IMR-90 (cell line): ENCODE measurements at regions of chr6 and their contacts with region 1.

Region 1: GRCh38 chr6:106339334-106340029 is 13.9 kb upstream of the ATG5 start:
- DNase-seq: peak; percentile 70
- ATAC-seq: peak; percentile 99
- H3K4me3 ChIP-seq: no peak overlapping the region
- H3K27ac ChIP-seq: no peak overlapping the region
- H3K4me1 ChIP-seq: no peaks in the 10 kb centered on the region
- H3K27me3 ChIP-seq: peaks cover 9% of the 10 kb centered on the region
- CTCF ChIP-seq: peak; percentile 73
- POLR2A ChIP-seq: no peak
- RAD21 ChIP-seq: peak; percentile 59

Region 2: GRCh38 chr6:105824732-105825131 is 514.8 kb before region 1 on chr6:
- CTCF ChIA-PET with region 1: no interaction called
- POLR2A ChIA-PET with region 1: no interaction called
- dilution Hi-C with region 1: no loop called
- in situ Hi-C with region 1: no loop called
- intact Hi-C with region 1: no loop called
- DNase-seq: peak; percentile 81
- ATAC-seq: peak; percentile 91
- H3K4me3 ChIP-seq: no peak overlapping the region
- H3K27ac ChIP-seq: no peak overlapping the region
- H3K4me1 ChIP-seq: no peaks in the 10 kb centered on the region
- H3K27me3 ChIP-seq: no peaks in the 10 kb centered on the region
- CTCF ChIP-seq: no peak
- POLR2A ChIP-seq: no peak
- RAD21 ChIP-seq: no peak

Region 3: GRCh38 chr6:106444777-106445507 is 105.5 kb after region 1 on chr6:
- CTCF ChIA-PET with region 1: interaction called, 3 read pairs
- POLR2A ChIA-PET with region 1: interaction called, 5 read pairs
- dilution Hi-C with region 1: no loop called
- in situ Hi-C with region 1: no loop called
- intact Hi-C with region 1: loop called (anchors 5 kb)
- DNase-seq: peak; percentile 69
- ATAC-seq: peak; percentile 75; the same call in 1 of the 2 replicates
- H3K4me3 ChIP-seq: no peak overlapping the region
- H3K27ac ChIP-seq: no peak overlapping the region
- H3K4me1 ChIP-seq: no peaks in the 10 kb centered on the region
- H3K27me3 ChIP-seq: peaks cover 18% of the 10 kb centered on the region
- CTCF ChIP-seq: peak; percentile 73
- POLR2A ChIP-seq: no peak
- RAD21 ChIP-seq: peak; percentile 78

Region 4: DNA sequence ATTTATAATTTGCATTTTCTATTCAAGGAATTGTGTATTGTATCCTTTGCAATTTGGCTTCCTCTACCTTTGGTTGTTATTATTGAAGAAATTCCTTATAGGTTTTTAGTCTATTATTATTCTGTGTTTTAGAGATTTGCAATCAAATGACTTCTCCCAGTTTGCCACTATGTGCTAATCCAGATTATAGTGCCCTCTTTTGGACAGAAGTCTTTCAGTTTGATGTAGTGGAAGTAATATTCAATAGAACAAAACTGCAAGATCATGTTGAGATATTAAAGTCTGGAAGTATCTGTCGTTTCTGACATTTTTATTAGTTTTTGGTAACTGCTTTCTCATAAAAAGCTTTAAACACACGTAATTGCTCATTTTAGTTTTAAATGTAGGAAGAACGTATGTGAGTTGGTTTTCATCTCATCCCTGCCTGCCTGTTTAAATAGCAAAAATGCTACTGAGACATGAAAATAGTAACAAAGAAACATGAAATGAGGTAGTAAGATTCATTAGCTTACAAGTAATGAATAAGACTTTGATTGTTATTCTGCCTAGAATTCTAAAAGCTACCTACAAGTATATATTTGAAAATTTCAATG is 217.0 kb after region 1 on chr6:
- CTCF ChIA-PET with region 1: interaction called, 3 read pairs
- POLR2A ChIA-PET with region 1: no interaction called
- dilution Hi-C with region 1: no loop called
- in situ Hi-C with region 1: loop called (anchors 10 kb)
- intact Hi-C with region 1: no loop called
- DNase-seq: peak; percentile 47
- ATAC-seq: peak; percentile 49; the same call in 1 of the 2 replicates
- H3K4me3 ChIP-seq: no peak overlapping the region
- H3K27ac ChIP-seq: no peak overlapping the region
- H3K4me1 ChIP-seq: no peaks in the 10 kb centered on the region; the same call in 1 of the 2 replicates
- H3K27me3 ChIP-seq: no peaks in the 10 kb centered on the region
- CTCF ChIP-seq: peak; percentile 54
- POLR2A ChIP-seq: no peak
- RAD21 ChIP-seq: peak; percentile 61

Region 5: DNA sequence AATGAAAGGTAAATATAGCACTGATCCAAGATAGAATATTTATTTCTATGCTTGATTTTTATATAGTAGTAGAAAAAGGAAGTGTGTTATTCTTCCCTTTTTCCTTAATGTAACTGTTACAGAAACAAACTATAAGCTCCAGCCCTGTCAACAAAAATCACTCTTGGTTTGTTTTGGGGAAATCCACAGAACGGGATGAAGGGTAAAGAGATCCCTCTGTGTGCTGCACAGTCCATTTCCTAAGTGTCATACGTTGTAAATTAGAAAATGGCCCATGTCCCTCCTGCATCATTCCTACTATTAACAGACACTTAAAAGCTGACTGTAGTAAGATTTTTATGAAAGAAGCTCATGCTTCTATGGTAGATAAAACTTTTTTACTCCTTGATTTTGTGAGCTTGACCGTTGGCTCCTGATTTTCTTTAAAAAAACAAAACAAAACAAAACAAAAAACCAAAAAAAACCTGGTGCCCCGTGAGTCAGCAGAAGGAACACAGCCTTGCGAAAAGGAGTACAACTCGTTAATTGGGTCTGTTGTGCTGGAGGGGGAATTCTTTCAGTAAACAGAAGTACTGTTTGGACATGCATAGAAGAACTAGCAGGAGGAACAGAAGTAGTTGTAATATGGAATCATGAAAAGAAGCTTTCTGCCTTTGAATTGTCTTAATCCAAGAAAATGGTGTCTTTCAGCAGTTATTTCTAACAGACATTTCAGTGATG is 222.4 kb after region 1 on chr6:
- CTCF ChIA-PET with region 1: interaction called, 11 read pairs
- POLR2A ChIA-PET with region 1: no interaction called
- dilution Hi-C with region 1: no loop called
- in situ Hi-C with region 1: loop called (anchors 10 kb)
- intact Hi-C with region 1: loop called (anchors 1 kb)
- DNase-seq: no peak
- ATAC-seq: no peak
- H3K4me3 ChIP-seq: no peak overlapping the region
- H3K27ac ChIP-seq: no peak overlapping the region
- H3K4me1 ChIP-seq: peaks cover 2% of the 10 kb centered on the region
- H3K27me3 ChIP-seq: no peaks in the 10 kb centered on the region
- CTCF ChIP-seq: no peak
- POLR2A ChIP-seq: no peak
- RAD21 ChIP-seq: no peak

Region 6: DNA sequence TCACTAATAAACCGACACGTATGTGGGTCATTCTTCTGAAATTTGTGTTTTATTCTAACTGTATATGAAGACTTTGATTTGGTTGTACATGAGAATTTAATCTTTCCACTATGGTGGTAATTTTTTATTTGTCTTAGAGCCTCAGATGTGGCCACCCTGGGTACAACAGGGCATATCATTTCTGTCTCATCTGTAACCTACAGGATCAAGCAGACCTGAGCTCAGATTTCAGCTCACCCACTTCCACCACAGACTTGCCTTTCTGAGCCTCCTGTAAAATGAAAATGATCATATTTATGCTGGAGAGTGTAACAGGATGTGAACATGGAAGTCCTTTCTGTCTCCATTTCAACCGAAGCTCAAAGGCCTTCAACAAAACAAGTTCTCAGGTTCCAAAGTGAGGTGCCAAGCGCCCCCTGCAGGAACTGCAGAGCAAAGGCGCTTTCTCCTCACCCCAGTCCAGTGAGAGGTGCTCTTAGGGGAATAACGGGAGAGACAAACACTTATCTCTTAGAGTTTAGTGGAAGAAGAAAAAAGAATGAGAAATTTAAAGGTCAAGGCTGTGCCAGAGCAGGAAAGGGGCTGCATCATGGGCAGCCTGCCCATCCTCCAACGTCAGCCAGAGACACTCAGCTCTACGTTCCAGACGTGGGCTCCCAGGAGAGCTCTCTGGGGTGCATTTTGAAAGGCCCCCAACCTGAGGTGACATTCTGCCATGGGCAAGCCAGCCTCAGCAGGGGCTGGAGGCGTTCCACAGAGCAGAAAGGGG is 658.1 kb after region 1 on chr6:
- CTCF ChIA-PET with region 1: interaction called, 3 read pairs
- POLR2A ChIA-PET with region 1: no interaction called
- dilution Hi-C with region 1: no loop called
- in situ Hi-C with region 1: loop called (anchors 25 kb)
- intact Hi-C with region 1: loop called (anchors 5 kb)
- DNase-seq: peak; percentile 51
- ATAC-seq: peak; percentile 78
- H3K4me3 ChIP-seq: no peak overlapping the region
- H3K27ac ChIP-seq: no peak overlapping the region
- H3K4me1 ChIP-seq: no peaks in the 10 kb centered on the region
- H3K27me3 ChIP-seq: no peaks in the 10 kb centered on the region
- CTCF ChIP-seq: peak; percentile 66
- POLR2A ChIP-seq: no peak
- RAD21 ChIP-seq: peak; percentile 48; the same call in 1 of the 2 replicates

Region 7: DNA sequence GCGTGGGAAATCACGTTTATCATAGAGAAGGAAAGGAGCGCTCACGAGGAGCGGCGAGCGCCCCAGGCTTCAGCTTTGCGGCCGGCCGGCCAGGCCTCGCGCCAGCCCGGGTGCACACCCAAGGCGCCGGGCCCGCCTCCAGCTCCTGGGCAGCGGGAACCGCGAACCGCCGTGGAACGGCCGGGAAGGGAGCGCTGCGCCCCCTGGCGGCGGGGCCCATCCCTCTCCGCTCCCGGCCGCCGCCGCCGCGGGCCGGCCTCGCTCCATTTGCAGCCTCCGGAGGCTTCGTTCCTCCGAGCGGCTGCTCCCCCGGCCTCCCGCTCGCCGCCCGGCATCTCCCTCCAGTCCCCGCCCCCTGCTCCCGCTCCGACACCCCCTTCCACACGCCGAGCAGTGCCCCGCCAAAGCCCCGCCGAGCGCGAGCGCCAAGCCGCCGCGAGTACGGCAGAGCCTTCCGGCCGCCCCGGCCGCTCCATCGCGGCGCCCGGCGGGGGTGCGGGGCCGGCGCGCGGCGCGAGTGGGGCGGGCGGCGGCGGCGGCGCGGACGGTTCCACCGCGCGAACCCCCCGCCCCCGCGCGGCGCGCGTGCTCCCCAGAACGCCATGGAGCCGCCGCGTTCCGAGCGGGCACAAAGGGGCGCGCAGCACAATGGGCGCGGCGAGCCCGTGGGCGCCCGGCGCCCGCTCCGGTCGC is 774.9 kb after region 1 on chr6:
- CTCF ChIA-PET with region 1: no interaction called
- POLR2A ChIA-PET with region 1: no interaction called
- dilution Hi-C with region 1: no loop called
- in situ Hi-C with region 1: no loop called
- intact Hi-C with region 1: loop called (anchors 2 kb)
- DNase-seq: peak; percentile 81
- ATAC-seq: peak; percentile 86
- H3K4me3 ChIP-seq: peak overlapping the region; percentile 98
- H3K27ac ChIP-seq: peak overlapping the region; percentile 53; the same call in 1 of the 2 replicates
- H3K4me1 ChIP-seq: no peaks in the 10 kb centered on the region
- H3K27me3 ChIP-seq: peaks cover 3% of the 10 kb centered on the region; the same call in 1 of the 2 replicates
- CTCF ChIP-seq: peak; percentile 91
- POLR2A ChIP-seq: no peak
- RAD21 ChIP-seq: peak; percentile 70